Transverse colon (tissue), 4 donors: ENCODE measurements at regions of chrX and their contacts with region 1.

Region 1: GRCh38 chrX:18424482-18425198 is 768 bp upstream of the CDKL5 start:
- DNase-seq: peak; percentile 19
- H3K4me3 ChIP-seq: peak overlapping the region; percentile 31 to 98 (median 82)
- H3K27ac ChIP-seq: peak overlapping the region; percentile 61 to 88 (median 76)
- H3K4me1 ChIP-seq: peaks cover 0 to 4% (median 0%) of the 10 kb centered on the region in 4 donors
- H3K27me3 ChIP-seq: no peaks in the 10 kb centered on the region
- CTCF ChIP-seq: no peak
- EP300 ChIP-seq: no peak
- POLR2A ChIP-seq: no peak

Region 2: DNA sequence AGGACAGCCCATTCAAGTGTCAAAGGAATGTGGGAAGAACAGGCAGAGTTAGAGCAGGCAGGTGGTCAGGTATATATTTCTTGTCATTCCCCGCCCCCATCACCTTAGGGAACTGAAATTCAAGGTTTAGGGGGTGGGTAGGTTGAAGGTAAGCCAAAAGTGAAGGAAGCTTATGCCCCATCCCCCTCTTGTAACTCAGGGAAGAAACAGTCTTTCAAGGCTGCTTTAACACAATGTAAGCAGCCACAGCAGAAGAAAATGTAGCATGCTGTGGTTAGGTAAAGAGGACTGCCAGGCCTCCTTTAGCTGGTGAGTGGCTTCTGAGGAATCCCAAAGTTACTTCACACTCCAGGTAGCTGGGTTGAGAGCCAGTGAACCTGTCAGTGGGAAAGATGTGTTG is 125.0 kb after region 1 on chrX:
- in situ Hi-C with region 1: no loop called
- intact Hi-C with region 1: no loop called
- DNase-seq: no peak
- H3K4me3 ChIP-seq: no peak overlapping the region
- H3K27ac ChIP-seq: no peak overlapping the region
- H3K4me1 ChIP-seq: no peaks in the 10 kb centered on the region
- H3K27me3 ChIP-seq: no peaks in the 10 kb centered on the region
- CTCF ChIP-seq: no peak
- EP300 ChIP-seq: no peak
- POLR2A ChIP-seq: no peak

Region 3: DNA sequence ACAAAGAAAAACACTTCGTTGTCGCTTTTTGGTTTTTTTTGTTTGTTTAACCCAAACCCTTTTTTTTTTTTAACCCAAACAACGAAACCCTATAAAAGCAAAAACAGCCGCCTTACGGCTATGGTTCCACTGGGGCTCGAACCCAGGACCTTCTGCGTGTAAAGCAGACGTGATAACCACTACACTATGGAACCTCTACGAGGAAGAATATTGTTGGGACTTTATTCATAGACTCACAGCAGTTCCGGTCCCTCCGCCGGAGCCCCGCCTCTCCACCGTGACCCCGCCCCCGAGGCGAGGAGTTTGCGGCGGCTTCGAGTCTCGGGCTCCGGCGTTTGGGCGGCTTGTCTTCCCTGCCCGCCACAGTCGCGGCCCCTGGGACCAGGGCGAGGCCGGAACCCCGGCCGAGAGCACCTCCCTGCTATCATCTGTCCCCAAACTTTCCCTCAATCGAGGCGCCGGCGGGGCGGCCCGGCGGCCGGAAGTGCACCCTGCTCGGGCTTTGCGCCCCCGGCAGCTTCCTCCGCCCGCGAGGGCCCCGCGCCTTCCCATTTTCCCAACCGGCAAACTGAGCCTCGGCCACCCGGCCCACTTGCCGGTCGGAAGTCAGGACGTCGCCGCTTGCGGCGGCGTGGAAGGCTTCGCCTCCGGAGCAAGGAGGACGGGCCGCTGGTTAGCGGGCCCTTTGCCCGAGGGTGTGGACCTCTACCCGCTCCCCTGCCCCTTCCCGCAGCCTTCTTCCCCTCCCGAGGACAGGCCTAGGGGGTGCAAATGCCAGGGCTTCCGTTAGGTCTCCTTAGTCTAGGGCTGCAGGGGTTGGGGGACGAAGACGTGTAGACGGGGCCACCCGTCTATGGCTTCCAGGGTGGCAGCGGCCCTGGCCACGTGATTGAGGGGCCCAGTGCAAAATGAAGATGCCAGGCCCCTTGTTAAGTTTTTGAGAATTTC is 250.4 kb after region 1 on chrX:
- in situ Hi-C with region 1: loop called in 1 of 4 experiments (anchors 25 kb)
- intact Hi-C with region 1: no loop called
- DNase-seq: peak; percentile 78
- H3K4me3 ChIP-seq: peak overlapping the region; percentile 56 to 77 (median 66)
- H3K27ac ChIP-seq: peak overlapping the region; percentile 82 to 93 (median 88)
- H3K4me1 ChIP-seq: no peaks in the 10 kb centered on the region
- H3K27me3 ChIP-seq: no peaks in the 10 kb centered on the region
- CTCF ChIP-seq: no peak
- EP300 ChIP-seq: no peak
- POLR2A ChIP-seq: peak; percentile 30

Region 4: GRCh38 chrX:18886344-18887161 is 461.9 kb after region 1 on chrX:
- in situ Hi-C with region 1: loop called in 3 of 4 experiments (anchors 25 kb)
- intact Hi-C with region 1: no loop called
- DNase-seq: peak; percentile 81
- H3K4me3 ChIP-seq: peak overlapping the region in 3 of 4 donors; percentile 24 to 51 (median 27)
- H3K27ac ChIP-seq: peak overlapping the region; percentile 67 to 84 (median 79)
- H3K4me1 ChIP-seq: peaks cover 0 to 21% (median 10%) of the 10 kb centered on the region in 4 donors
- H3K27me3 ChIP-seq: no peaks in the 10 kb centered on the region
- CTCF ChIP-seq: peak; percentile 42 to 81 (median 51)
- EP300 ChIP-seq: no peak
- POLR2A ChIP-seq: peak; percentile 50